ENCODE measurements at regions of chr3 and their contacts with region 1.

Region 1: GRCh38 chr3:196969660-196970546 is 1.3 kb upstream of the PIGZ start:
- DNase-seq: no peak
- H3K4me3 ChIP-seq: peak overlapping the region; percentile 72 to 88 (median 76)
- H3K27ac ChIP-seq: peak overlapping the region; percentile 72 to 83 (median 79)
- H3K4me1 ChIP-seq: peaks cover 0 to 16% (median 11%) of the 10 kb centered on the region in 4 donors
- H3K27me3 ChIP-seq: no peaks in the 10 kb centered on the region
- CTCF ChIP-seq: peak in 3 of 4 experiments; percentile 15 to 95 (median 20)
- EP300 ChIP-seq: no peak
- POLR2A ChIP-seq: no peak

Region 2: GRCh38 chr3:196837819-196838420 is 132.0 kb before region 1 on chr3:
- intact Hi-C with region 1: loop called (anchors 2 kb)
- DNase-seq: peak; percentile 71
- H3K4me3 ChIP-seq: no peak overlapping the region
- H3K27ac ChIP-seq: no peak overlapping the region
- H3K4me1 ChIP-seq: no peaks in the 10 kb centered on the region
- H3K27me3 ChIP-seq: no peaks in the 10 kb centered on the region
- CTCF ChIP-seq: peak; percentile 48 to 77 (median 52)
- EP300 ChIP-seq: no peak
- POLR2A ChIP-seq: no peak

Measured in sigmoid colon (tissue), 7 donors.